Adrenal gland (tissue), 19 donors: ENCODE measurements at regions of chr18 and their contacts with region 1.

Region 1: DNA sequence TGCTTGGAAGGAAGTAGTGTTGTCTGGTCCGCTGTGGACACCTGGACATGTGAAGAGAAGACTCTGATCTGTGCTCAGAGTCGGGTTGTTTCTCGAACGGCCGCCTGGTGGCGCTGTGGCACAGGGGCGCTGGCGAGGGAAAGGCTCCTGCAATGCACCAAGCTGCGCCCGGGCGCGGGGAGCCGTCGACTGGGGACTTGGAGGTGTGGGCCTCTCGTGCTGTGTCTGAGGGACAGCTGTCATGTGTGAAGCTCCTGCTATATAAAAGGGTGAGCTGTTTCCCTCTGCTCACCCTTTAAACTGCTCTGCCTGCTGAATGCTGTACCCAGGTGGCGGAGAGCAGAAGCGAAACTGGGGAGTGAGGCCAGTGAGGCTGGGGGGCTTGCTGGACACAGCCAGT is 44.0 kb downstream of the GNAL start:
- DNase-seq: peak; percentile 58 to 86 (median 76)
- H3K4me3 ChIP-seq: peak overlapping the region in 1 of 4 donors; percentile 23
- H3K27ac ChIP-seq: no peak overlapping the region
- H3K4me1 ChIP-seq: no peaks in the 10 kb centered on the region
- H3K27me3 ChIP-seq: peaks cover 15% of the 10 kb centered on the region
- CTCF ChIP-seq: peak; percentile 71 to 97 (median 85)
- POLR2A ChIP-seq: no peak

Region 2: GRCh38 chr18:11872479-11873136 is 139.6 kb after region 1 on chr18:
- intact Hi-C with region 1: loop called in 1 of 2 experiments (anchors 10 kb)
- DNase-seq: peak in 6 of 7 donors; percentile 45 to 58 (median 54)
- H3K4me3 ChIP-seq: no peak overlapping the region
- H3K27ac ChIP-seq: no peak overlapping the region
- H3K4me1 ChIP-seq: no peaks in the 10 kb centered on the region
- H3K27me3 ChIP-seq: no peaks in the 10 kb centered on the region
- CTCF ChIP-seq: peak; percentile 14 to 62 (median 48)
- POLR2A ChIP-seq: no peak

Region 3: GRCh38 chr18:12038639-12039417 is 305.8 kb after region 1 on chr18:
- intact Hi-C with region 1: loop called in 1 of 2 experiments (anchors 10 kb)
- DNase-seq: peak; percentile 78 to 92 (median 88)
- H3K4me3 ChIP-seq: peak overlapping the region in 2 of 4 donors; percentile 41 to 58
- H3K27ac ChIP-seq: no peak overlapping the region
- H3K4me1 ChIP-seq: peaks cover 0 to 3% of the 10 kb centered on the region in 2 donors
- H3K27me3 ChIP-seq: no peaks in the 10 kb centered on the region
- CTCF ChIP-seq: peak; percentile 94 to 99 (median 98)
- POLR2A ChIP-seq: peak in 1 of 2 donors; percentile 31